Activated CD4-positive, alpha-beta memory T cell treated with anti-CD3 and anti-CD28 coated beads, Interleukin-2, amount 10 ng/mL, durations not matched to agents 7 days and 5 days (primary cell): ENCODE measurements at regions of chr4 and their contacts with region 1.

Region 1: DNA sequence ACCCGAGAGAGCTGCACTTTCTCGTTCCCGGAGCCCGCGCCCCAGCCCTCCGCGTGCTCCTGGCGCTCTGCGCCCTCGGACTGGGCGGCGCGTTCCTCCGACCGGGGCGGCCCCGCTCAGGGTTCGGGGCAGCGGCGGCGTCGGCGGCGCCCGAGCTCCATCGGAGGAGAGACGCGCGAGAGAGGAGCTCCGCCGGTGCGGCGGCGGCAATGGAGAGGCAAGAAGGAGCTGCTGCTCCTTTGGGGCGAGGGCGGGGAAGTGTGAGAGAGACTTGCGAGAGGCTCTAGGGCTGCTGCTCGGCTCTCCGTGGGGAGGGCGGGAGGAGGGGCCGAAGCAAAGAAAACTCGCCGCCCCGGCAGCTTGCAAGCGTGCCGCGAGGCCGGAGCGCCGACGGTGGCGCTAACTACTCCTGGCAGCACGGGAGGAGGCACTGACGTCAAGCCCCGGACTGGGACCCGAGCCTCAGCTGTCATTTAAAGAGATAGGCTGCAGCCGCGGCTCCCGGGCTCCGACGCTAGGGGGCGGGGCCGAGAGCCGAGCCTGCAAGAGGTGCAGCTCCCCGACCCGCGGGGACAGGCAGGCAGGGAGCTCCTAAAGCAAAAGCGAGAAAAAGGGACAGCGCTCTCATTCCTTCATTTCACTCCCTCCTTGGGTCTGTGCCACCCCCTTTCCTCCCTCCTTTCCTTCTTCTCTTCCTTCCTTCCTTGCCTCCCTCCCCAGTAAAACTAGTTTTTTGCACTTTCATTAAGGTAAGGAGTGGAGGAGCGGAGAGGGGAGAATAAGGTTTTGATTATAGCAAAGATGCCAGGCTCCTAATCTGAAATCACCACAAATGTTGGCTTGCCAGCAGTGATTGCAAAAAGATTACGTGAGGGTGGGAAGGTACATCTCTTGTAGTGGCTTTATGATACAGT is at the start of gene KCTD8:
- DNase-seq: peak; percentile 68
- H3K4me3 Mint-ChIP-seq: peak within 1 kb of the TSS; percentile 5
- H3K27ac Mint-ChIP-seq: no peak within 1 kb of the TSS
- H3K4me1 Mint-ChIP-seq: peaks cover 10% of the 10 kb centered on the region
- H3K27me3 Mint-ChIP-seq: peaks cover 44% of the 10 kb centered on the region
- total RNA-seq, gene KCTD8: not detected

Region 2: DNA sequence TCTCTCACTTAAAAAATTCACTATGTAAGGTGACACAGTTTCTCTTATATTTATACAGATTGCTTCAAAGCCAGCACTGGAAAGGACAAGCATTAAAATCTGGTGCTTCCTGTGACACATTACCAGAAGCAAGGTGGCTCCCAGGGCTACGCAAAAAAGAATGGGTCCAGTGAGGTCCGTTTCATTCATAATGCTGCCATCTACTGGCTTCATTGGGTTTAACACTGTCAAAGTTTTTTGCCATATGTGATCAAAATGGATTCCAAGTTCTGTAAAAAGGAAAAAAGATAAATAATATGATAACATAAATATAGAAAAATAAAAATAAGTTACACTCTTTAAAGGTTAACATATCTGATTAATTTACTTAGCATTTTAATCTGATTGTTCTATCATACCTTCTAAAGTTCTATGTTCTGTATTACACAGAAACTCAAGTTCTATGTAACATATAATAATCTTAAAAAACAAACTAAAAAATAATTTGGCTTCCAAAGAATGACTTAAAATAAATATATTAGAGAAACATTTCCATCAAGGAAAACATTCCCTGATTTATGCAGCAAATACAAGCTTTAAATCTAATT is 180.6 kb after region 1 on chr4:
- CTCF ChIA-PET with region 1: interaction called, 11 read pairs
- POLR2A ChIA-PET with region 1: no interaction called
- DNase-seq: peak; percentile 30
- H3K4me3 Mint-ChIP-seq: no peak overlapping the region
- H3K27ac Mint-ChIP-seq: no peak overlapping the region
- H3K4me1 Mint-ChIP-seq: no peaks in the 10 kb centered on the region
- H3K27me3 Mint-ChIP-seq: no peaks in the 10 kb centered on the region